Ovary (tissue), 10 donors: ENCODE measurements at regions of chr4 and their contacts with region 1.

Region 1: DNA sequence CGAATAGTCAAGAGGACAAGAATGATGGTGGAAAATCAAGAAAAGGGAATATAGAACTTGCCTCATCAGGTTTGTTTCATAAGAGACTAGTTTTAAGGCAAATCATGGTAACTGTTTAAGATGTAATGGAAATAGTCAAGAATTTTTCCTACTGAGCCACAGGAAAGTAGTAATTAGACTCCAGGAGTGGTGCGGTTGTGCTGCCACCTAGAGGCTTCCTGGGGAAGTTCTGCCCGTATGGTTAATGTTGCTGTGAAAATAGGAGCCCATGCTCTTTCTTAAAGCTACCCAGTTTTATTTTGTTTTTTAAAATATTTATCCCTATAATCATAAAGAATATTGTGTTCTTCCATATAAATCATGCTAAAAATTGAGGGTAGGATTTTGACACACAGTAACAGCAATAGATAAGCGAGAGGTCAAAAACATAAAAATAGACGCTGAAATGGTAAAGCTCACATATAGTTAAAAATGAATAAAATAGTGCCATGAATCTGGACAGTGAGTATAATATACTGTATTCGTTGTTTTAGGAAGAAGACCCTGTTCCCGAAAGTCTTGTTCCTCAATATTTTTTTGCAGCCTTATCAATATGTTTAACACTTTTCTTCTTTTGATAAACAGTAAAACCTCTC is 87.0 kb downstream of the PHOX2B start:
- DNase-seq: peak; percentile 31 to 72 (median 64)
- H3K4me3 ChIP-seq: no peak overlapping the region
- H3K27ac ChIP-seq: no peak overlapping the region
- H3K4me1 ChIP-seq: no peaks in the 10 kb centered on the region
- H3K27me3 ChIP-seq: no peaks in the 10 kb centered on the region
- CTCF ChIP-seq: peak; percentile 63 to 88 (median 83)
- EP300 ChIP-seq: no peak
- POLR2A ChIP-seq: no peak

Region 2: GRCh38 chr4:41281038-41281634 is 380.4 kb before region 1 on chr4:
- intact Hi-C with region 1: loop called (anchors 5 to 10 kb)
- DNase-seq: peak in 2 of 5 donors; percentile 13 to 39
- H3K4me3 ChIP-seq: no peak overlapping the region
- H3K27ac ChIP-seq: no peak overlapping the region
- H3K4me1 ChIP-seq: no peaks in the 10 kb centered on the region
- H3K27me3 ChIP-seq: no peaks in the 10 kb centered on the region
- CTCF ChIP-seq: peak; percentile 57 to 93 (median 88)
- EP300 ChIP-seq: no peak
- POLR2A ChIP-seq: no peak

Region 3: GRCh38 chr4:41287050-41287449 is 374.5 kb before region 1 on chr4:
- intact Hi-C with region 1: loop called (anchors 5 to 10 kb)
- DNase-seq: no peak
- H3K4me3 ChIP-seq: no peak overlapping the region
- H3K27ac ChIP-seq: no peak overlapping the region
- H3K4me1 ChIP-seq: no peaks in the 10 kb centered on the region
- H3K27me3 ChIP-seq: no peaks in the 10 kb centered on the region
- CTCF ChIP-seq: no peak
- EP300 ChIP-seq: no peak
- POLR2A ChIP-seq: no peak